GM18951 (cell line): ENCODE measurements at regions of chr19 and their contacts with region 1.

Region 1: DNA sequence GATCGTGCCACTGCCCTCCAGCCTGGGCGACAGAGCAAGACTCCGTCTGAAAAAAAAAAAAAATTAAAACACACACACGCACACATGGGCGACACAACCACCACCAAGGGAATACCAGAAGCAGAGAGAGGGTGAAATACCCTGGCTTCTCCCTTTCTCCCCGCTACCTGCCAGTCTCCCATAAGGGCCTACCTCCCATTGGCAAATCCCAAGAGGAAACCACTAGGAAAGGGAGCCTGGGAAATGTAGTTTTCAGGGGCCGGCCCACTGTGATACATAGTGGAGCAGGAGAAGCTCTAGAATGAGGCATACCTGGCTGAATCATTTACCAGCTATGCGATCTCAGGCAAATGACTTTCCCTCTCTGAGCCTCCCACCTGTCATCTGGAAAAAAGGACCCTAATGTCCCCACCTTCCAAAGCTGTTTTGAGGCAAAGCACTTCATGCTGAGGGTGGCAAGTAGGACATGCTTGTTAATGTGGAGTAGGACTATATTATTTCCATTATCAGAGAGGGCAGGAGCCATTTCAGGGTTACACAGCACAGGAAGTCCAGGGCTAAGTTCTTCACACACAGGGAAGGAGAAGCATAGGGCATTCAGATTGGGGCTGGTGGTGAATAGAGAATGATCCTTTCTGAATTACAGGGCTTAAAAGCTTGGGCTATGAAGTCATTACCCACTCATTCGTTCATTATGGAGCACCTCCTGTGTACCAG is 14.3 kb upstream of the HNRNPUL1 start:
- POLR2A ChIP-seq: no peak

Region 2: DNA sequence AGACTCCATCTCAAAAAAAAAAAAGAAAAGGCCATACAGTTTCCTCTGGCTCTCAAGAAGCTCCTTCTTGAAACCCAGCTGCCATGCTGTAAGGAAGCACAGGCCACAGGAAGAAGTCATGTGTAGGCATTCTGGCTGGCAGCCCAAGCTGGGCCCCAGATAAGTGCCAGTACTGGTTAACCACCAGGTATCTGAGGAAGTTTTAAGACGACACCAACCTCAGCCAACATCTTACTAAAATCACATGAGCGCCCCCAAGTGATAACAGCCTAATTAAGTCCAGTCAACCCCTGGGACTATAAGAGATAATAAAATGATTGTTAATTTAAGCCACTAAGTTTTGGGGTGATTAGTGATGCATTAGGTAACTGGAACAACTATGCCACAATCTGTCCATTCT is 937.3 kb before region 1 on chr19:
- in situ Hi-C with region 1: no loop called
- POLR2A ChIP-seq: no peak

Region 3: GRCh38 chr19:41064974-41065569 is 184.8 kb before region 1 on chr19:
- in situ Hi-C with region 1: no loop called
- POLR2A ChIP-seq: no peak

Region 4: DNA sequence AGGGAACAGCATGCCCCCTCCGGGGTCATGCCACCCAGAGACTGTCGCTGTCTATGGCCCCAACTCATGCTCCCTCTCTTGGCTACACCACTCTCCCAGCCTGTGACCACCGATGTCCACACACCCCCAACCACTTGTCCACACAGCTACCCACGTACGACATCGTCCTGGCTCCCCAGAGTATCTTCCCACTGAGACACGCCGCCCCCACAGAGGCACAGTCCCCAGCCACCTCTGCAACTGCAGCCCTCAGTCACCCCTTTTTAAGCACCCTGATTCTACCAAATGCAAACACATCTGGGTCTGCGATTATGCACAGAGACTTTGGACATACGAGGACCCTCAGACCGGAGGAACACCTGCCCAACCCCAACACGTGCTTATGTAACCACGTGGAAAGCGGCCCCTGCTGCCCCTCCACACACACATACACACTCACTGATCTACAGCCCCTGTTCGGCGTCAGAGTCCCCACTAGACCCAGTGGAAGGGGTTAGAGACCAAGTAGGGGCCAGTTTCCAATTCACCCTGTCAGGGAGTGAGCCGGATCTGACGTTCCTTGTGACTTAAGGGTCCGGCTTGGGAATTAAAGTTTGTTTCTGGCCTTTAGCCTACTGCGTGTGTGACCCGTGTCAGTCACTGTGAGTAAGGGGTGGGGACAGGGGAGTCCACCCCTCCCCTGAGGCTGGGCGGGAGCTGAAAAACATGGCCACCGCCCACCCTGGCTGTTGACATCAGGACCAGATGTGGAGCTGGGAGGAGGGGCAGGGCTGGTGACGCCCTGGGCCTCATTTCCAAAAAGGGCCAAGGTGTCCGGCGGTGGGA is 42.7 kb before region 1 on chr19:
- in situ Hi-C with region 1: loop called (anchors 10 kb)
- POLR2A ChIP-seq: no peak